Caco-2 (cell line): ENCODE measurements at regions of chr19 and their contacts with region 1.

Region 1: DNA sequence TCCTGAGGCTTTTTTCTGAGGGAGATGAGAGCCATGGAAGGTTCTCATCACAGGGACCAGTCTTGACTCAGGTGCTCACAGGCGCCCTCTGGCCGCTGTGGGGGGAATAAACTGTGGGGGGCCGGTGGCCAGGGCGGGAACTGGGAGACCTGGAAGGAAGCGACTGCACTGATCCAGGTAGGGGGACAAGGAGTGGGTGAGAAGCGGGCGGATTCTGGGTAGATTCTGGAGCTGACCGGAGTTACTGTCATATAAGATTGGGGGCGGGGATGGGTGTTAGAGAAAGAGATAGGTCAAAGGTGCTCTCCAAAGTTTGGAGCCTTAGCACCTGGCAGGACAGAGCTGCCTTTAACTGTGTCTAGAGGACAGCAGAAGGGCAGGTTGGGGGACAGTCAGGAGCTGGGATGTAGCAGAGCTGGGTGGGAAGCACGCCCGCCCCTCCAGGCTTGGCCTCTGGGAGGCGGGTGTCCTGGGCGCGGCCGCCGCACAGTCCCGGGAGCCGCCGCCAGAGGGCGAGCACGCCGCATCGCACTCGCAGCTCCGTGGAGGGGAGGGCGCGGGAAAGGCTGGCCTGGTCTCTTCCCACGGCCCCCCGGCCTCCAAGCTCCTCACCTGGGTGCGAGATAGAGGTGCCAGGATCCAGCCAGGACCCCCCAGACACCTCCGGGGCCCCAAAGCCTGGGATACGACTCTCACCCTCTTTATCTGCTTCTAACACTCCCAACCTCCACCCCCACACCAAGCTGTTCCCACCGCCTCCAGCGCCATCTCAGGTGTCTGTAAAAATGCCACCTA is 4.2 kb upstream of the DAND5 start:
- DNase-seq: peak; percentile 86 to 90
- H3K4me3 ChIP-seq: peak overlapping the region; percentile 54
- H3K4me3 Mint-ChIP-seq: peak overlapping the region; percentile 83
- H3K27ac Mint-ChIP-seq: peak overlapping the region; percentile 86
- H3K4me1 ChIP-seq: no peaks in the 10 kb centered on the region
- H3K4me1 Mint-ChIP-seq: peaks cover 7% of the 10 kb centered on the region
- H3K27me3 ChIP-seq: no peaks in the 10 kb centered on the region
- H3K27me3 Mint-ChIP-seq: peaks cover 4% of the 10 kb centered on the region
- CTCF ChIP-seq: peak; percentile 68 to 92

Region 2: DNA sequence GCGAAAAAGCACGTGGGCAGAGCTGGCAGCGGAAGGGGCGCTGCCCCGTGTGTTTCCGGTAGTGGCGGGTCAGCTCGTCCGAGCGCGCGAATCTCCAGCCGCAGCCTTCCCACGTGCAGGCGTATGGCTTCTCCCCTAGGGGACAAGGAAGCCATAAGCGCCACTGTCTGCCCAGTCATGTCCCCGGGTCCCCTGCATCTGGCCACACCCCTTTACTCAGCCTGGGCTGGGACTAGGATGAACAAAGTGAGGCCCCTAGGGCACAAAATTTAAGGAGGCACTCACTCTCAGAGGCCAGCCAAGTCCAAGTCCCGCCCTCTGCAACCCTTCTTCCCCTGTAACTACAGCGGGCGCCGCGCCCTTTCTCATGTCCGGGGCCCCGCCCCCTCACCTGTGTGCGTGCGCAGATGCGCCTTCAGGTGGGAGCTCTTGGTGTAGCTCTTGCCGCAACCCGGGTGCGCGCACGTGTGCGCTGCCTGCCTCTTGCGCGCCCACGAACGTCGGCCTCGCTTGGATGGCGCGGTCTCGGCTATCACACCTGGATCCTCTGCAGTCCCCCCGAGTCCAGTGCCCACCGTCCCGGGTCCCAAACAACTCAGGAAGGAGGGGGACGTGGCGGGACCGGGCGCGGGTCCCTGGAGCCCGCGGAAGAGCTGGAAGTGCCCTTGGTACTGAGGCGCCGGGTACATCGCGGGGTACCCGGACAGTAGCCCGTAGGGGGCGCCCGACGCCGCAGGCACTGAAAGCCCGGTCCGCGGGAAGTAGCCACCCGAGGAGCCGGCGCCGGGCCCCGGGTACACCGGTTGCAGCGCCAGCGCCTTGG is 80.1 kb before region 1 on chr19:
- CTCF ChIA-PET with region 1: interaction called, 12 read pairs
- POLR2A ChIA-PET with region 1: no interaction called
- intact Hi-C with region 1: no loop called
- DNase-seq: peak; percentile 87 to 88
- H3K4me3 ChIP-seq: peak overlapping the region; percentile 43
- H3K4me3 Mint-ChIP-seq: peak overlapping the region; percentile 80
- H3K27ac Mint-ChIP-seq: no peak overlapping the region
- H3K4me1 ChIP-seq: no peaks in the 10 kb centered on the region
- H3K4me1 Mint-ChIP-seq: no peaks in the 10 kb centered on the region
- H3K27me3 ChIP-seq: no peaks in the 10 kb centered on the region
- H3K27me3 Mint-ChIP-seq: peaks cover 5% of the 10 kb centered on the region
- CTCF ChIP-seq: peak in 1 of 2 experiments; percentile 49

Region 3: GRCh38 chr19:13051267-13052165 is 86.3 kb after region 1 on chr19:
- CTCF ChIA-PET with region 1: interaction called, 17 read pairs
- POLR2A ChIA-PET with region 1: no interaction called
- intact Hi-C with region 1: no loop called
- DNase-seq: peak; percentile 93
- H3K4me3 ChIP-seq: no peak overlapping the region
- H3K4me3 Mint-ChIP-seq: peak overlapping the region; percentile 44
- H3K27ac Mint-ChIP-seq: no peak overlapping the region
- H3K4me1 ChIP-seq: peaks cover 17% of the 10 kb centered on the region
- H3K4me1 Mint-ChIP-seq: peaks cover 11% of the 10 kb centered on the region
- H3K27me3 ChIP-seq: peaks cover 9% of the 10 kb centered on the region
- H3K27me3 Mint-ChIP-seq: peaks cover 38% of the 10 kb centered on the region
- CTCF ChIP-seq: no peak

Region 4: GRCh38 chr19:13060964-13061927 is 96.0 kb after region 1 on chr19:
- CTCF ChIA-PET with region 1: interaction called, 41 read pairs
- POLR2A ChIA-PET with region 1: no interaction called
- intact Hi-C with region 1: no loop called
- DNase-seq: peak; percentile 56 to 82
- H3K4me3 ChIP-seq: peak overlapping the region; percentile 21
- H3K4me3 Mint-ChIP-seq: peak overlapping the region; percentile 37
- H3K27ac Mint-ChIP-seq: no peak overlapping the region
- H3K4me1 ChIP-seq: no peaks in the 10 kb centered on the region
- H3K4me1 Mint-ChIP-seq: no peaks in the 10 kb centered on the region
- H3K27me3 ChIP-seq: peaks cover 3% of the 10 kb centered on the region
- H3K27me3 Mint-ChIP-seq: peaks cover 19% of the 10 kb centered on the region
- CTCF ChIP-seq: peak; percentile 83 to 91

Region 5: GRCh38 chr19:13093407-13094105 is 128.3 kb after region 1 on chr19:
- CTCF ChIA-PET with region 1: interaction called, 34 read pairs
- POLR2A ChIA-PET with region 1: no interaction called
- intact Hi-C with region 1: no loop called
- DNase-seq: peak; percentile 68 to 76
- H3K4me3 ChIP-seq: no peak overlapping the region
- H3K4me3 Mint-ChIP-seq: no peak overlapping the region
- H3K27ac Mint-ChIP-seq: no peak overlapping the region
- H3K4me1 ChIP-seq: no peaks in the 10 kb centered on the region
- H3K4me1 Mint-ChIP-seq: peaks cover 11% of the 10 kb centered on the region
- H3K27me3 ChIP-seq: no peaks in the 10 kb centered on the region; the same call in 1 of the 2 replicates
- H3K27me3 Mint-ChIP-seq: peaks cover 10% of the 10 kb centered on the region
- CTCF ChIP-seq: peak; percentile 84 to 92